Activated CD8-positive, alpha-beta memory T cell treated with anti-CD3 and anti-CD28 coated beads, Interleukin-2, amount 10 ng/mL, durations not matched to agents 7 days and 5 days (primary cell): ENCODE measurements at regions of chr14 and their contacts with region 1.

Region 1: GRCh38 chr14:64421166-64421565 is 33.0 kb downstream of the MTHFD1 start:
- DNase-seq: no peak
- ATAC-seq: no peak
- H3K4me3 Mint-ChIP-seq: no peak overlapping the region
- H3K27ac Mint-ChIP-seq: peak overlapping the region; percentile 63
- H3K4me1 Mint-ChIP-seq: peaks cover 35% of the 10 kb centered on the region
- H3K27me3 Mint-ChIP-seq: no peaks in the 10 kb centered on the region

Region 2: DNA sequence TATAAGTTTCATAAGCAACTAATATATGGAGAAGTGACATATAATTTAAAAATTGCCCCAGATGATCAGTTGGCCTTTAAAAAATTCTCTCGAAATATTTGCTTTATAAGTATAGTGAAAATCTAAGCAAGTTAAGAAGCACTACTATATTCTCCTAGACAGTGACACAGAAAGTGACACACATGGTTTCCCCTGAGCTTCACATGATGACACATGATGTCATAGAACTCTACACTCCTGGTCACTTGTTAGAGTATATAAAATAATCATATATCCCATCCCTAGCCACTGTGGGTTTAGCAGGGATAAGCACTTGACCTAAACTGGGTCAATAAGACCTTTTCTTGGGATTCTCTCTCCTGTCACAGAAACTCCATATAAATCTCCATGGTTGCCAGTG is 75.7 kb before region 1 on chr14:
- CTCF ChIA-PET with region 1: interaction called, 36 read pairs
- DNase-seq: no peak
- ATAC-seq: no peak
- H3K4me3 Mint-ChIP-seq: no peak overlapping the region
- H3K27ac Mint-ChIP-seq: no peak overlapping the region
- H3K4me1 Mint-ChIP-seq: peaks cover 5% of the 10 kb centered on the region
- H3K27me3 Mint-ChIP-seq: no peaks in the 10 kb centered on the region

Region 3: DNA sequence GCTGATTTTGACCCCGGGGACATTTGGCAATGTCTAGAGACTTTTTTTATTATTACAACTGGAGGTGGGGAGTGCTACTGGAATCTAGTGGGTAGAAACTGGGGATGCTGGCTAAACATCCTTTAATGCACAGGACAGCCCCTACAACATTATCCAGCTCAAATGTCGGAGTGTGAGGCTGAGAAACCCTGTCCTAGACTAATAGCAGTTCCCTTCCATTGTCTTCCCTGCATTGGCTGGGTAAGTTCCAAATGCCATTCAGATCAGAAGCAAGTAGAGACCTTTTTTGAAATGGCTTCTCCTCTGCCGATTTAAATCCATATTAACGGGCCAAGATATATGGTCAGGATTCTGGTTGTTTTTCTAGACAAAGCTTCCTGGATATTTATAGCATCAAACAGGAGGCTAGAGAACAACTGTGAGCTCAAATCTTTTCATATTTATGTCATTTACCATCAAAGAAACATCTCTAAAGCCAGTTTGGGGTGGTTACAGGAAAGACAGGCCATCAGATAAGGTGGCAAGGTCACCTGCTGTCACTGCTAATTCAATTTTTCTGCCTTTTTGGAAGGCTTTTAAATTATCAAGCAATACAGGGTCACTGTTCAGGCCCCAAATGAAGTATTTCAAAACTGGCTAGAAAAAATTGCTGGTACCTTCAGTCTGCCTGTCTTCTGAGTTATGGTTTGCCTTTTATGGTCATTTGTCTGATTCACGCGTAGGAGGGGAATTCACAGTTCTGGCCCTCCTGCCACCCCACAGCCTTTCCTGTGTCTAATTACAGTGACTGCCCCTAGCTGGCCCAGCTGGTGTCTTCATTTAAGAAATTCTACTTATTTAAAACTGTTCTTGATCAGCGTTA is 24.0 kb after region 1 on chr14:
- CTCF ChIA-PET with region 1: no interaction called
- DNase-seq: peak; percentile 78
- ATAC-seq: peak; percentile 86
- H3K4me3 Mint-ChIP-seq: no peak overlapping the region
- H3K27ac Mint-ChIP-seq: peak overlapping the region; percentile 90
- H3K4me1 Mint-ChIP-seq: peaks cover 55% of the 10 kb centered on the region
- H3K27me3 Mint-ChIP-seq: no peaks in the 10 kb centered on the region